ENCODE measurements at regions of chr5 and their contacts with region 1.

Region 1: DNA sequence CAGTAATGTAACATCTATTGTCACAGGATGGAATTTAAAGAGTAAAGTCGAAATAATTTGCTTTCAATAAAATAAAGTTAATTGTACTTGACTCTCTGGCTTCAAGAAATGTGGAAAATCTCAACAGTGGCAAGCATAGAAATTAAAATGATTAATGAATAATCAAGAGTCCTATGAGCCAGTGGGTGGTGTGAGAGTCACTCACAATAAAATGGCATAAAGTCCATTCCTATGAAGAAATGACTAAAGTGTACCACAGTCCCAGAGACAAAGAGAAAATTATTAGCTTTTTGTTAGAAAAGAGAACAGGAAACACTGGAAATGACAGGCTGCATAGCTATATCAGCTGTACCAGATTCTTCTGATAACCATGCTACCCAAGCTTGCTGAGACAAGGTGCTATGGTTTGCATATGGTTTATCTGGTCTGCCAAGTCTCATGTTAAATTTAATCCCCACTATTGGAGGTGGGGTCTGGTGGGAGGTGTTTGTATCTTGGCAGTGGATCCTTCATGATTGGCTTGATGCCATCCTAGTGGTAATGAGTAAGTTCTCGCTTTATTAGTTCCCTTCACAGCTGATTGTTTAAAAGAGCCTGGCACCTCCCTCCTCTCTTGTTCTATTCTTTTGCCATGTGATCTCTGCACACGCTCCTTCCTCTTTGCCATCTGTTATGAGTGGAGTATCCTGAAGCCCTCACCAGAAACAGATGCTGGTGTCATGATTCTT is 647.7 kb upstream of the ITGA1 start:
- DNase-seq: peak; percentile 80
- H3K4me3 ChIP-seq: no peak overlapping the region
- H3K27ac ChIP-seq: no peak overlapping the region
- H3K4me1 ChIP-seq: no peaks in the 10 kb centered on the region
- H3K27me3 ChIP-seq: no peaks in the 10 kb centered on the region
- CTCF ChIP-seq: no peak
- POLR2A ChIP-seq: no peak

Region 2: DNA sequence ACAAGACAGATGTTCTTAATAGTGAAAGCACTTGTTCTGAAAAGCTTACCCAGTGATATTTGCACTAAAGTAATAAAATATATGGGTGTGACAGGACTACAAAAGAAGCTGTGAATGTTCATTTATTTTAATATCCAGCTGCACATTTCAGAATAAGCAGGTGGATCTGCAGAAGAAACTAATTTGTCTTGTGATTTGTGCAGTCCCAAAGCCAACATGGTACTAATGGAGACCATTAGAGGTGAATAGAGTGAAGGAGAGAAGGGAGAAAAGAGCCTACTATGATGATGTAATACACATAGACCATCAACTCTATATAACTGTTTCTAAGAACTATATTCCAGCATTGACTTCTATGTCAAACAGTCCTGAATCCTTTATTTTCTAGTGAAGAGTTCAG is 394.0 kb before region 1 on chr5:
- CTCF ChIA-PET with region 1: no interaction called
- POLR2A ChIA-PET with region 1: no interaction called
- dilution Hi-C with region 1: no loop called
- intact Hi-C with region 1: no loop called
- DNase-seq: no peak
- H3K4me3 ChIP-seq: no peak overlapping the region
- H3K27ac ChIP-seq: no peak overlapping the region
- H3K4me1 ChIP-seq: no peaks in the 10 kb centered on the region
- H3K27me3 ChIP-seq: no peaks in the 10 kb centered on the region
- CTCF ChIP-seq: no peak
- POLR2A ChIP-seq: no peak

Region 3: DNA sequence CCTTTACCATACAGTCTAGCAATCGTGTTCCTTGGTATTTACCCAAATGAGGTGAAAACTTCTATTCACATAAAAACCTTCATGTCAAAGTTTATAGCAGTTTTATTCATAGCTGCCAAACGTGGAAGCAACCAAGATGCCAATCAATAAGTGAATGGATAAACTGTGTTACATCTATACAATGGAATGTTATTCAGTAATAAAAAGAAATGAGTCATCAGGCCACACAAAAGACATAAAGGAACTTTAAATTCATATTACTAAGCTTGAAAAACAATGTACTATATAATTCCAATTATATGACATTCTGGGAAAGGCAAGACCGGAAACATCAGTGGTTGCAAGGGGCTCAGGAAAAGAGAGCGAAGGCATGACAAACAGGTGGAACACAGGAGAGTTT is 76.9 kb before region 1 on chr5:
- CTCF ChIA-PET with region 1: interaction called, 5 read pairs
- POLR2A ChIA-PET with region 1: no interaction called
- dilution Hi-C with region 1: no loop called
- intact Hi-C with region 1: loop called (anchors 1 kb)
- DNase-seq: peak; percentile 69
- H3K4me3 ChIP-seq: no peak overlapping the region
- H3K27ac ChIP-seq: peak overlapping the region; percentile 11
- H3K4me1 ChIP-seq: peaks cover 2% of the 10 kb centered on the region
- H3K27me3 ChIP-seq: no peaks in the 10 kb centered on the region
- CTCF ChIP-seq: no peak
- POLR2A ChIP-seq: no peak

Region 4: GRCh38 chr5:52269859-52270258 is 129.8 kb after region 1 on chr5:
- CTCF ChIA-PET with region 1: no interaction called
- POLR2A ChIA-PET with region 1: no interaction called
- dilution Hi-C with region 1: no loop called
- intact Hi-C with region 1: loop called (anchors 5 kb)
- DNase-seq: no peak
- H3K4me3 ChIP-seq: no peak overlapping the region
- H3K27ac ChIP-seq: no peak overlapping the region
- H3K4me1 ChIP-seq: no peaks in the 10 kb centered on the region
- H3K27me3 ChIP-seq: no peaks in the 10 kb centered on the region
- CTCF ChIP-seq: no peak
- POLR2A ChIP-seq: no peak

Region 5: DNA sequence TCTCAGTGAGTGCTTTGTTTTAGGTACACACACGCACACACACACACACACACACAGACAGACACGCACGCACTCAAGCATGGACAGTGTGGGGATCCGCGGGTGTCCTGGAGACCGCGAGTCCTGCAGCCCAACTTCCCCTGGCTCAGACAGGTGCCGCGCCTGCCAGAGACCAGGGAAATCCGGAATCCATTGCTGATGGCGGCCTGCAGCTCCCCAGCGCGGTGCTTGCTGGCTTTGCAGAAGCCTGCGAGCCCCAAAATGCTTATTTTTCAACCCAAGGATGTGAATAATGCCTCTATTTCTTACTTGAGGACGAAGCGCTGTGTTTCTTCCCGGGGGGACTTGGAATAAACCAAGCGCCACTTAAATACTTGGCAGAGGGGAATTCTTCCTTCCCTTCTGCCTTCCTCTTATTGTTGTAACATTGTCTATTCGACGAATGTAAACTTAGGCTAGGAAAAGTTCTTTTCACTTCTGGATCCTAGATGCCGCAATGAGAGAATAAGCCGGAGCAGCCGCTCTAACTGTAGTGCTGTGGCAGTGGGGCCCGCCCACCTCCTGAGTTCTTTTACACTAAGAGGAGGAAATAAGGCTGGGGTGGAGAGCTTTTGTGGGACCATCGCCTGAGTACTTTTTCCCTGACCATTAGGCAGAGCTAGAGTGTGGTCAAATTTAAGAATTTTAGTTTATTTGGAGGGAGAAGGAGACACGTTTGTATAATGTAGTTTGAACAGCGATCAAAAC is 849.9 kb after region 1 on chr5:
- CTCF ChIA-PET with region 1: no interaction called
- POLR2A ChIA-PET with region 1: no interaction called
- dilution Hi-C with region 1: no loop called
- intact Hi-C with region 1: no loop called
- DNase-seq: peak; percentile 78
- H3K4me3 ChIP-seq: peak overlapping the region; percentile 56 to 80 (median 61)
- H3K27ac ChIP-seq: peak overlapping the region; percentile 31
- H3K4me1 ChIP-seq: peaks cover 61% of the 10 kb centered on the region
- H3K27me3 ChIP-seq: no peaks in the 10 kb centered on the region
- CTCF ChIP-seq: peak; percentile 29 to 45
- POLR2A ChIP-seq: no peak